Activated CD4-positive, alpha-beta T cell treated with anti-CD3 and anti-CD28 coated beads, Interleukin-2, amount 10 ng/mL, durations not matched to agents 24 days and 14 days (primary cell): ENCODE measurements at regions of chr1 and their contacts with region 1.

Region 1: GRCh38 chr1:44029906-44030604 is 1.2 kb downstream of the SLC6A9 start:
- DNase-seq: peak; percentile 97
- H3K4me3 Mint-ChIP-seq: peak overlapping the region; percentile 95
- H3K27ac Mint-ChIP-seq: peak overlapping the region; percentile 93
- H3K4me1 Mint-ChIP-seq: peaks cover 31% of the 10 kb centered on the region
- H3K27me3 Mint-ChIP-seq: no peaks in the 10 kb centered on the region

Region 2: DNA sequence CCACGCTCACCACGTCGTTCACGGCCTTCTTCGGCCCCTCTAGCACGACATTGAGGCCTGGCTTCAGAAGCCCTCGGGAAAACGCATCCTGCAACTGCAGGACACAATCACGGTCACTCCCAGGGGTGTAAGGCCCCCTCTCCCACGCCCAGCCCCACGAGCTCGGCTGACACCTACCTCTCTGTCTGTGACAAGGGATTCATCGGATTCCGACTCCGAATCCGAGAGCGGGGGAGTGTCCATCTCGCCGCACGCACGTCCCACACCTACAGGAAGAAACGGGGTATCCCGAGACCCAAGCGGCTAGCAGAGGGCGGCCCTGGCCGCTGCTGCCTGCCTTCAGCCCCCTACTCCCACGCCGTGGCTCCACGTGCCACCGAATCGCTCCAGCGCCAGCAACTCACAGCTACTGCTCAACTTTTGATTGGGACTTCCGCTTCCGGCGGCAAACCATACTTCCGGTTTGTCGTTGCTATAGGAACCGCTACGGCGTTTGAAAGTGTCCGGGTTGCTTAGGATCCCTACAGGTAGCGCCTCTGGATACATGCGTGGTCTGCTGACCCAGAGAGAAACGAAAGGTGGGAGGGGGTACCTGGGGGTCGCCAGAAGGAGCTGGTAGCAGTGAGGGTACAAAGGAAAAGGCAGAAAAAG is 858.1 kb before region 1 on chr1 and contains the starts of genes CFAP57 and EBNA1BP2:
- intact Hi-C with region 1: loop called (anchors 5 kb)
- DNase-seq: peak; percentile 98
- H3K4me3 Mint-ChIP-seq: peak within 1 kb of the TSS; percentile 97
- H3K27ac Mint-ChIP-seq: peak within 1 kb of the TSS; percentile 97
- H3K4me1 Mint-ChIP-seq: peaks cover 26% of the 10 kb centered on the region
- H3K27me3 Mint-ChIP-seq: peaks cover 22% of the 10 kb centered on the region
- total RNA-seq, gene CFAP57: 0.40 TPM in 1 of 2 replicates, not detected in the other
- total RNA-seq, gene EBNA1BP2: 134 and 135 TPM in 2 replicates

Region 3: GRCh38 chr1:43763497-43763973 is 266.5 kb before region 1 on chr1:
- intact Hi-C with region 1: loop called (anchors 10 kb)
- DNase-seq: peak; percentile 85
- H3K4me3 Mint-ChIP-seq: no peak overlapping the region
- H3K27ac Mint-ChIP-seq: no peak overlapping the region
- H3K4me1 Mint-ChIP-seq: peaks cover 2% of the 10 kb centered on the region
- H3K27me3 Mint-ChIP-seq: no peaks in the 10 kb centered on the region

Region 4: GRCh38 chr1:43974443-43975248 is 55.4 kb before region 1 on chr1 and contains the start of gene ATP6V0B:
- intact Hi-C with region 1: loop called (anchors 2 kb)
- DNase-seq: peak; percentile 99
- H3K4me3 Mint-ChIP-seq: peak within 1 kb of the TSS; percentile 91
- H3K27ac Mint-ChIP-seq: peak within 1 kb of the TSS; percentile 86
- H3K4me1 Mint-ChIP-seq: peaks cover 49% of the 10 kb centered on the region
- H3K27me3 Mint-ChIP-seq: no peaks in the 10 kb centered on the region
- total RNA-seq, gene ATP6V0B: 181 and 182 TPM in 2 replicates

Region 5: DNA sequence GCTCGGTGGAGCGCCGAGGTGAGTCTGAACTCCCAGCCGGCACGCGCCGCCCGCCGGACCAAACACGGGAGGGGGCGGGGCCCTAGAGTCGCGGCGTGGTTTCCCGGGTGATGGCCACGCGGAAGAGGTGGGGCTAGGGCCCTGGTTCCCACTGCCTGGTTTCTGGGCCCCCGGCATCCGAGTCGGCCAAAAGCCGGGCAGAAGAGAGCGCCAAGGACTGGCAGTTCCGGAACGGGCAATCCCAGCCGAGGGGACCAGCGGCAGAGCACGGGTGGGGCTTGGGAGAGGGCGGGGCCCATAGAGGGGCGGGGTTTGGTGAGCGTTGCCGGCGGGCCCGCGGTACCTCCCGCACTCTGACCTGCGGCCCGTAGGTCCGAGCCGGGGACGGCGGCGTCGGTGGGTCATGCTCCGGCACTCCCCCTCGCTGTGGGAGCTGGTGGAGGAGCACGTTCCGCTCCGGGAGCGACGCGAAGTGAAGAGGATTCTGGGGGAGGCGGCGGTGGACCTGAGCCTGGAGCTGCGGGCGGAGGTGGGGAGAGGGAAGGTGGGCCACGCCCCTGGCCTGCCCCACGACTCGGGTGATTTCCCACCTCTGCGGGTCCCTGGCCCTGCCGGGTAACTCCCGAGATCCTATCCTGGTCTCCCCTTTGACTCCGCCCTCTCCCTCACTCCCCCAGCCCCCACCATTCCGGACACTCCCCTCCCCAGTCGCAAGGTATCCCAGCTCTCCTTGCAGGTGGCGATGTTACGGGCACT is 38.4 kb before region 1 on chr1 and contains the start of gene CCDC24:
- intact Hi-C with region 1: loop called (anchors 1 kb)
- DNase-seq: peak; percentile 95
- H3K4me3 Mint-ChIP-seq: peak within 1 kb of the TSS; percentile 92
- H3K27ac Mint-ChIP-seq: peak within 1 kb of the TSS; percentile 84
- H3K4me1 Mint-ChIP-seq: peaks cover 14% of the 10 kb centered on the region
- H3K27me3 Mint-ChIP-seq: no peaks in the 10 kb centered on the region
- total RNA-seq, gene CCDC24: 3.0 and 4.3 TPM in 2 replicates

Region 6: GRCh38 chr1:44002606-44003157 is 27.4 kb before region 1 on chr1:
- intact Hi-C with region 1: no loop called
- DNase-seq: no peak
- H3K4me3 Mint-ChIP-seq: no peak overlapping the region
- H3K27ac Mint-ChIP-seq: no peak overlapping the region
- H3K4me1 Mint-ChIP-seq: peaks cover 2% of the 10 kb centered on the region
- H3K27me3 Mint-ChIP-seq: no peaks in the 10 kb centered on the region

Region 7: GRCh38 chr1:44094047-44094446 is 64.0 kb after region 1 on chr1:
- intact Hi-C with region 1: no loop called
- DNase-seq: no peak
- H3K4me3 Mint-ChIP-seq: no peak overlapping the region
- H3K27ac Mint-ChIP-seq: no peak overlapping the region
- H3K4me1 Mint-ChIP-seq: no peaks in the 10 kb centered on the region
- H3K27me3 Mint-ChIP-seq: peaks cover 31% of the 10 kb centered on the region